ENCODE measurements at regions of chr11 and their contacts with region 1.

Region 1: GRCh38 chr11:46649180-46649738 is 31.9 kb downstream of the ATG13 start:
- DNase-seq: no peak

Region 2: GRCh38 chr11:46338988-46339666 is 310.1 kb before region 1 on chr11:
- intact Hi-C with region 1: no loop called
- DNase-seq: no peak

Region 3: GRCh38 chr11:46686886-46687795 is 37.9 kb after region 1 on chr11:
- intact Hi-C with region 1: no loop called
- DNase-seq: no peak

Region 4: DNA sequence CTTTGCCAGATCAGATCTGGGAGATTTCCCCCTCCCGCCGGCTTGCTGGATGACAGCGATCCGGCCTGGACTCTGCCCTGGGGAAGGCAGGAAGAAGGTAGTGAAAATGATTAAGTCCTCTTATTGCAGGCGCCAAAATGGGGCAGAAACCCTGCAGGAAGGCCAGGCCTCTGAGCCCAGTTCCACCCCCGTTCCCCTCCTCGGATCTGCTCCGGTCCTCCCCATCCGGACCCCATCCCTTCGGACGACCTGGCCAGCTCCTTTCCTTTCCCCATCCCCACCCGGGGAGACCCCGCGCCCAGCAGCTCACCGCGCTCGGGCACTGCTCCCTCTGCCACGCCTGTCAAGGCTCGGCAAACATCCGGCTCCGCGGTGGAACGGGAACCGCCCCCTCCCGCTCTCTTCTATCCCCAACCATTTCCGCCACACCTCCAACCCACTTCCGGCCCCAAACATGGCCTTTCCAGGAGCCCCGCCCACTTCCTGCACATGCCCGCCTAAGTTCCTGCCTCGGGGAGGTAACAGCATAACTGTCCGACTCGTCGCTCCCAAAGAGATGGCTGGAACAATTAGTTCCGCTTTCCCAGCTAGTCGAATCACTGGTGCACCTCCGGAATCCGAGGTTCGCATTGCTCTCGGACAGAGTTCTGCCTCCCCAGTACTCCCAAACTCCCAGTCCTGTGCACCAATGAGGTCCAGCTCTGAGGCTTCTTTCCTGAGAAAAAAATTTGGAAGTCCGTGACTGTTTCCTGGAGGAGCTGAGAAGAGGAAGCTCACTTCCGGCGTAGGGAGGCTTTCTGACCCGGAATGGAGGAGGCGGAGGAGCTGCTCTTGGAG is 51.2 kb after region 1 on chr11 and contains the starts of genes ARHGAP1 and ZNF408:
- intact Hi-C with region 1: loop called (anchors 5 kb)
- DNase-seq: peak; percentile 100
- total RNA-seq, gene ARHGAP1: 152 TPM
- total RNA-seq, gene ZNF408: 6.7 TPM